IMR-90 (cell line): ENCODE measurements at regions of chr6 and their contacts with region 1.

Region 1: DNA sequence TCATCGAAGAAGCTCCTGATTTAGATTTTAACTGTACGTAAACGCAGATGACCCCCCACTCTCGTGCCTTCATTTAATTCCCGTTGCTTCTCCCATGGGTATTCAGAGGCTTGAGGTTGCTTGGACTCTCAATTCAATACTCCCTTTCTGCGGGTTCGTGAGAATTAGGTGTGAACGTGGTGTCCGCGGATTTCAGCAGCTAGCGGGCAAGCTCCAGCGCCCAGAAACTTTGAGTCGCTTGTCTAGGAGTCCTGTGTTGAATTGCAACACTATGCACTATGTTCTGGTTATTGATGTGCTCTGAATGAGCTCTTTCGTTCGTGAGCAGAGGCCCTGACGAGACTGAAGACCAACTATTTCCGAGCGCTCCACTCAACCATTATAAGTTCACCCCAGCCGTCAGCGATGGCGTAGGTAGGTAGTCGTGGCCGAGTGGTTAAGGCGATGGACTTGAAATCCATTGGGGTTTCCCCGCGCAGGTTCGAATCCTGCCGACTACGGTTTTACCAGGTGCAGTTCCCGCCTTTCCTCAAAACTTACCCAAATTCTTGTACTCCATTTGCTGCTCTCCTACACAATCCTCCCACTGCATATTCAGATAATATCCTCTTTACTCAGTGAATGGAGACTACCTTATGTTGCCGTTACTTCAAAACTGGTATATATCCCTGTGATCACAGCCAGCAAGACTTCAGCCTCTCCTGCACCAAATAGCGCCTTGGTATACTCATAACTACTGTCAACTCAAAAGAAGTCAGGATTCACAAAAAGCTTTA is 72.6 kb upstream of the ZNF184 start:
- DNase-seq: peak; percentile 76
- ATAC-seq: peak; percentile 84
- H3K4me3 ChIP-seq: peak overlapping the region; percentile 50
- H3K27ac ChIP-seq: no peak overlapping the region
- H3K4me1 ChIP-seq: no peaks in the 10 kb centered on the region
- H3K27me3 ChIP-seq: no peaks in the 10 kb centered on the region
- CTCF ChIP-seq: no peak
- POLR2A ChIP-seq: no peak
- RAD21 ChIP-seq: no peak

Region 2: DNA sequence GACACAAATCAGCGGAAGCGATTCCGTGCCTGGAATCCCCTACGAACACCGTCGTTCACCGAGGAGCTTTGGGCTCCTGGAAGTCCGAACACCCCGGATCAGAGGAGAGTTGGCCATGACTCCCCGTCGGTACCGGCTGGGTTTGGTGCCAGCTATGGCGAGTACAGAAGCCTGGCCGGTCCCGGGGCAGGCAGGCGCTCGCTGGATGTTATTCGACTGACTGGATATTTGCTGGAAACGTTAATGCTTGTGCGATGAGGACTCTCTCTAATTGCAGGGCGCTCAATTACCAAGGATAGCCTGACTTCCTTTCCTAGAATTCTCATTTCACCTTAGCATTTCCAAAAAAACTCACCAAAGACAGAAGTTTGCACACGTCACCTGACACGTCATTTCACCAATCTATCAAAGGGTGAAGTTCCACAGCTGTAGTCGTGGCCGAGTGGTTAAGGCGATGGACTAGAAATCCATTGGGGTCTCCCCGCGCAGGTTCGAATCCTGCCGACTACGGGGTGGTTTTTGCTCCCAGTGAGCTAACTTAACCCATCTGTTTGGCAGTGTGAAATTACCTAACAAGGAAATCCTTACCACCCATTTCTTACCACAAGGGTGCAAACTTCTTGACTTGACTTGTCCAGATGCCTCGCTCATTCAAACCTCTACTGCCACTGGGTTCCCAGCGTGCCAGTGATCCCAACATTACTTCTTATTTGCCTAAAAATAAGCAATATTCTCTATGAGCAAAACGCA is 49.9 kb before region 1 on chr6:
- CTCF ChIA-PET with region 1: no interaction called
- POLR2A ChIA-PET with region 1: no interaction called
- dilution Hi-C with region 1: no loop called
- in situ Hi-C with region 1: no loop called
- intact Hi-C with region 1: loop called (anchors 2 kb)
- DNase-seq: peak; percentile 91
- ATAC-seq: peak; percentile 94
- H3K4me3 ChIP-seq: peak overlapping the region; percentile 71
- H3K27ac ChIP-seq: peak overlapping the region; percentile 19; the same call in 1 of the 2 replicates
- H3K4me1 ChIP-seq: no peaks in the 10 kb centered on the region
- H3K27me3 ChIP-seq: no peaks in the 10 kb centered on the region
- CTCF ChIP-seq: peak; percentile 42
- POLR2A ChIP-seq: no peak
- RAD21 ChIP-seq: no peak

Region 3: GRCh38 chr6:27503436-27504030 is 41.9 kb before region 1 on chr6:
- CTCF ChIA-PET with region 1: no interaction called
- POLR2A ChIA-PET with region 1: no interaction called
- dilution Hi-C with region 1: no loop called
- in situ Hi-C with region 1: no loop called
- intact Hi-C with region 1: loop called (anchors 1 kb)
- DNase-seq: peak; percentile 78
- ATAC-seq: peak; percentile 53
- H3K4me3 ChIP-seq: peak overlapping the region; percentile 74
- H3K27ac ChIP-seq: no peak overlapping the region
- H3K4me1 ChIP-seq: no peaks in the 10 kb centered on the region
- H3K27me3 ChIP-seq: no peaks in the 10 kb centered on the region
- CTCF ChIP-seq: no peak
- POLR2A ChIP-seq: no peak
- RAD21 ChIP-seq: no peak; the same call in 1 of the 2 replicates

Region 4: GRCh38 chr6:27518881-27519795 is 26.3 kb before region 1 on chr6:
- CTCF ChIA-PET with region 1: no interaction called
- POLR2A ChIA-PET with region 1: no interaction called
- dilution Hi-C with region 1: no loop called
- in situ Hi-C with region 1: no loop called
- intact Hi-C with region 1: loop called (anchors 1 kb)
- DNase-seq: peak; percentile 90
- ATAC-seq: peak; percentile 87
- H3K4me3 ChIP-seq: peak overlapping the region; percentile 74
- H3K27ac ChIP-seq: peak overlapping the region; percentile 76
- H3K4me1 ChIP-seq: peaks cover 2% of the 10 kb centered on the region; the same call in 1 of the 2 replicates
- H3K27me3 ChIP-seq: peaks cover 2% of the 10 kb centered on the region
- CTCF ChIP-seq: peak; percentile 72
- POLR2A ChIP-seq: no peak
- RAD21 ChIP-seq: peak; percentile 55

Region 5: DNA sequence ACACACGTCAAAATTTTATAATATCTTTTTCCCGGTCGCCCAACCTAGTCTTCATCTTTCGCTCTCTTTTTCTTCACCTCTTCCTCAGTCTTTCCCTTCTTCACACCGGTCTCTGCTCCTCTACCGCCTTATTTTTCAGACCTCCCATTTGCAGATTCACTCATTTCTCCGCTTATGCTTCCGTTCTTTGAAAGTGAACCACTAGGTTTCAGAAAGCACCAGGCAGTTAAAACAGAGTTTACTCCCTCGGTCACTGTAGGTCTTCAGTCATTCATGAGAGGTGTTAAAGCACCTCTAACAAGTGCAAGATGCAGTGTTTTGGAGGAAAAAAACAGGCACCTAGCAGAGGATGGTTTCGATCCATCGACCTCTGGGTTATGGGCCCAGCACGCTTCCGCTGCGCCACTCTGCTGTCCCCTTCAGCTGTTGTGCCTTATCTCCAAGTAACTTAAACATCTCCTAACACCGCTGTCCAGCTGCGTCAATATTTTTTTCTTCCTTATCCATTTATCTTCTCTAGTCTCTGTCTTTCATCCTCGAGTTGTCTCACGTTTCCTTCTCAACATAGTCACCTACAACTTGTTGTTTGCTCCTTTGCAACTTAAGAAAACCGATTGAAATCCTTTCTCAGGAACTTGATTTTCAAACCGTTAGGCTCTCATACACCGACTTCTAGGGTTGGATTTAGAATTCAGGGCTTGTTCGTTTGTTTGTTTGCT is 47.2 kb after region 1 on chr6:
- CTCF ChIA-PET with region 1: no interaction called
- POLR2A ChIA-PET with region 1: no interaction called
- dilution Hi-C with region 1: no loop called
- in situ Hi-C with region 1: no loop called
- intact Hi-C with region 1: loop called (anchors 5 kb)
- DNase-seq: peak; percentile 90
- ATAC-seq: peak; percentile 98
- H3K4me3 ChIP-seq: peak overlapping the region; percentile 31; the same call in 1 of the 2 replicates
- H3K27ac ChIP-seq: no peak overlapping the region
- H3K4me1 ChIP-seq: no peaks in the 10 kb centered on the region
- H3K27me3 ChIP-seq: no peaks in the 10 kb centered on the region
- CTCF ChIP-seq: no peak
- POLR2A ChIP-seq: no peak
- RAD21 ChIP-seq: no peak